Sciatic nerve (tissue), 2 donors: ENCODE measurements at regions of chr12 and their contacts with region 1.

Region 1: DNA sequence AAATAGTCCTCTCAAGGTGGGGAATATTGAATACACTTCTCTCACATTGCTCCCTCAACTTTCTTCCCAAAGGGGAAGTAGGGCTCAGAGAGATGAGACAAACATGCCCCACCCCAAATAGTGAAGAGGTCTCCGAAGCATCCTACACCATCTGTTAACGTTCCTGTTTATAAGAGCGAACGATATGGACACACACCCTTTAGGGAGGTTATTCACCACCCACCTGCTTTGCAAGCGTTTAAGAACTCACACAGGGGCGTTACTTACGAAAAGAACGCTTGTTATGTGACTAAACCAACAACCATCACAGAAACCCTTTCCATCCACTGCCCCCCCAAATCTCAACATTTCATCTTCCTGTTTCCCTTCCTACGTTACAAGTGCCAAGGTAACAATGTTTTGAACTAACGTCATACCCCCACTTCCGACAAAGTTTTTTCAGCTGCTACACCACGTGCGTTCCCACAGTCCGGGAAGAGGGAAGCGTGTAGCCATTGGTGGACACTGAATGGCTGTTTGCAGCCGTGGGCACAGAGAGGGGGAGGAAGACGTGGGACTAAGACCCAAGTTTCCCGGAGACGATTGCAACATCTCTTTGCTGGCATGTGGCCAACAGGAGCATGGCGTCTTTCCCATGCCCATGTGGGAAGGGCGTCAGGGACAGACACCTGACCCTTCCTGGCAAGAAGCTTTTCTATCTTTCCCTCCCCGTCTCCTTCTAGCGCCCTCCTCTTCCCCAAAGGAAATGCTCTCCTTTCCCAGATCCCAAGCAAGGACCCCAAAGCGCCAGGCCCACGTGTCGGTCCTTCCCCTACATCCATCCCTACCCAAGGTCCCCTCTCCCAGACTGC is 1.2 kb downstream of the YBX3 start:
- DNase-seq: peak; percentile 97
- ATAC-seq: peak; percentile 97

Region 2: DNA sequence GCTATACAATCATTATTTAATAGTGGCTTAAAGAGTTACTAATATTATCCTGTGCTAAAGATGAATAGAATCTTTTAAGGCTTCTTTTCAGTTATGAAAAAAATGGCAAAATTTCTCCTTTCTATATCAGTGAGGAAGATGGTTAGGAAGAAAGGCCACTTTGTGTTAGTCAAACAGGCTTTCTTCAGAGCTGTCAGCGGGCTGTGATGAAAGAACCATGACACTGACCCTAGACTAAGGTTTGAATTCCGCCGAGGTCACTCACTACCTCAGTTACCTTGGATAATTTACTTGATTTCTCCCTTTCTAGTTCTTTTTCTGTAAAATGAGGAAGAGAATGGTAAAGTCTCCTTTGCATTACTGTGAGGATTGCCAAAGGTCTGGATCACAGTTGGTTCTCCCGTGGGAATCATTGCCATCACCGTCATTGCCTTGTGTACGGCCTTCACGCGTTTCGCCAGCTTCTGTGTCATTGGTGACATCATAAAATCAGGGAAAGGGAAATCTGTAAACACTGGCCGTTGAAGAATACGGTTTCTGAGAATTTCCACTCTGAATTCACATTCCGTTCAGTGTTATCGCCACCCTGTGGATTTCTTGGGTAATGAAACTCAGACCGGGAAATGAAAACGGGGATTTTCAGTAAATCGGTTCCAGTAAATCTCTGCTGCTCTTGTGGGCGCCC is 28.0 kb after region 1 on chr12:
- intact Hi-C with region 1: loop called (anchors 2 kb)
- DNase-seq: peak; percentile 82
- ATAC-seq: peak; percentile 97

Region 3: DNA sequence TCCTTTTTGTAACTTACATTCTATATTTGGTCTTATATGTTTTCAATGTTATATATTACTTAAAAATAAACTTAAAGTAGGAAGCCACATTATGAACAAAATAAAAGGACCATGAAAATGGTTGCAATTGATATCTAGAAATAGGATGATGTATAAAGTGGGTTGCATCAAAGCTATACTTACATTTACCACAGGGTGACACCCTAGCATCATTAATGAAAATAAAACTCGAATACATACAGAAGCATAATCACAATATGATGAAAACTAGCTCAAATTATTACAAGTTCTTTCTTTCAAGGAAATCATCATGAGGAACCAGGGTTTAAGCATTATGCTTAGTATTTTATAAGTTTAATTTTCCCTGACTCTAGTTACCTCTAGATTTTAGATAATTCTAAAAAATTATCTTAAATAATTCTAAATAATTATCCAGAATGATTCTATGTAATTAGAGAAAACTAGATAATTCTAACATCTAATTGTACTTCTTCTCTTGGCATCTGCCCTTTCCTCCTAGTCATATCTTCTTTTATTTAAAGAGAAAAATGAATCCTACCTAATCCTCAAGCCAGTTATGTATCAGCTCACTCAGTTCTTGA is 49.4 kb after region 1 on chr12:
- intact Hi-C with region 1: no loop called
- DNase-seq: no peak
- ATAC-seq: no peak